CD4-positive, alpha-beta T cell (primary cell): ENCODE measurements at regions of chr9 and their contacts with region 1.

Region 1: GRCh38 chr9:93003552-93004407 is 54.7 kb upstream of the SUSD3 start:
- DNase-seq: peak; percentile 47 to 85 (median 56)
- ATAC-seq: peak; percentile 77
- H3K4me3 ChIP-seq: no peak overlapping the region
- H3K4me3 Mint-ChIP-seq: peak overlapping the region; percentile 71
- H3K27ac ChIP-seq: peak overlapping the region; percentile 7 to 63
- H3K27ac Mint-ChIP-seq: peak overlapping the region; percentile 88
- H3K4me1 ChIP-seq: peaks cover 48% of the 10 kb centered on the region
- H3K4me1 Mint-ChIP-seq: peaks cover 65% of the 10 kb centered on the region
- H3K27me3 ChIP-seq: no peaks in the 10 kb centered on the region
- H3K27me3 Mint-ChIP-seq: no peaks in the 10 kb centered on the region
- CTCF ChIP-seq: peak; percentile 79

Region 2: GRCh38 chr9:92882276-92882675 is 121.5 kb before region 1 on chr9:
- CTCF ChIA-PET with region 1: no interaction called
- POLR2A ChIA-PET with region 1: no interaction called
- intact Hi-C with region 1: no loop called
- DNase-seq: no peak
- ATAC-seq: no peak
- H3K4me3 ChIP-seq: no peak overlapping the region
- H3K4me3 Mint-ChIP-seq: no peak overlapping the region
- H3K27ac ChIP-seq: no peak overlapping the region
- H3K27ac Mint-ChIP-seq: no peak overlapping the region
- H3K4me1 ChIP-seq: peaks cover 21% of the 10 kb centered on the region
- H3K4me1 Mint-ChIP-seq: peaks cover 57% of the 10 kb centered on the region
- H3K27me3 ChIP-seq: no peaks in the 10 kb centered on the region
- H3K27me3 Mint-ChIP-seq: no peaks in the 10 kb centered on the region
- CTCF ChIP-seq: no peak

Region 3: GRCh38 chr9:92986176-92987085 is 17.3 kb before region 1 on chr9:
- CTCF ChIA-PET with region 1: interaction called, 15 read pairs
- POLR2A ChIA-PET with region 1: interaction called, 4 read pairs
- intact Hi-C with region 1: loop called in 1 of 2 experiments (anchors 2 kb)
- DNase-seq: peak in 12 of 14 experiments; percentile 37 to 80 (median 58)
- ATAC-seq: peak; percentile 67
- H3K4me3 ChIP-seq: no peak overlapping the region
- H3K4me3 Mint-ChIP-seq: peak overlapping the region; percentile 59
- H3K27ac ChIP-seq: peak overlapping the region; percentile 33 to 61
- H3K27ac Mint-ChIP-seq: peak overlapping the region; percentile 75
- H3K4me1 ChIP-seq: peaks cover 59% of the 10 kb centered on the region
- H3K4me1 Mint-ChIP-seq: peaks cover 82% of the 10 kb centered on the region
- H3K27me3 ChIP-seq: no peaks in the 10 kb centered on the region
- H3K27me3 Mint-ChIP-seq: no peaks in the 10 kb centered on the region
- CTCF ChIP-seq: peak; percentile 79

Region 4: DNA sequence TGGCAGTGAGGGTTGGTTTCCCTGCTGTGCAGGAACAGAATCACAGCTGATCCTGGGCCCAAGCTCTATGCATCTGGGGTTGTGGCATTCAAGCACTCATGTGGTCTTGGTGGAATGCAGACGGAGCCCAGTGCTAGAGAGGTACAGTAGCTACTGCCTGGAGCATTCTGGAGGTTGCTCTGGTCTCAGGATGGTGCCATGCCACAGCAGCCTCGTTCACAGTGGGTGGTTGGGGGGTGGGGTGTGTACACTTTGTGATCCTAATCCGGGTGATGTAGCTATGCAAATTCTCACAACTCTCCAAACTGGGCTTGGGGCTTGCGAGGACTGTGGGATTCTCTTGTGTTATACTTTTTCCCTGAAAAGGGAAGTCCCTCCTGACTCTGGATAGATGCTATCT is 11.2 kb before region 1 on chr9:
- CTCF ChIA-PET with region 1: interaction called, 15 read pairs
- POLR2A ChIA-PET with region 1: interaction called, 4 read pairs
- intact Hi-C with region 1: loop called in 1 of 2 experiments (anchors 2 kb)
- DNase-seq: peak in 1 of 14 experiments; percentile 23
- ATAC-seq: no peak
- H3K4me3 ChIP-seq: no peak overlapping the region
- H3K4me3 Mint-ChIP-seq: peak overlapping the region; percentile 2
- H3K27ac ChIP-seq: peak overlapping the region in 1 of 2 donors; percentile 22
- H3K27ac Mint-ChIP-seq: peak overlapping the region; percentile 75
- H3K4me1 ChIP-seq: peaks cover 38% of the 10 kb centered on the region
- H3K4me1 Mint-ChIP-seq: peaks cover 99% of the 10 kb centered on the region
- H3K27me3 ChIP-seq: no peaks in the 10 kb centered on the region
- H3K27me3 Mint-ChIP-seq: no peaks in the 10 kb centered on the region
- CTCF ChIP-seq: no peak

Region 5: DNA sequence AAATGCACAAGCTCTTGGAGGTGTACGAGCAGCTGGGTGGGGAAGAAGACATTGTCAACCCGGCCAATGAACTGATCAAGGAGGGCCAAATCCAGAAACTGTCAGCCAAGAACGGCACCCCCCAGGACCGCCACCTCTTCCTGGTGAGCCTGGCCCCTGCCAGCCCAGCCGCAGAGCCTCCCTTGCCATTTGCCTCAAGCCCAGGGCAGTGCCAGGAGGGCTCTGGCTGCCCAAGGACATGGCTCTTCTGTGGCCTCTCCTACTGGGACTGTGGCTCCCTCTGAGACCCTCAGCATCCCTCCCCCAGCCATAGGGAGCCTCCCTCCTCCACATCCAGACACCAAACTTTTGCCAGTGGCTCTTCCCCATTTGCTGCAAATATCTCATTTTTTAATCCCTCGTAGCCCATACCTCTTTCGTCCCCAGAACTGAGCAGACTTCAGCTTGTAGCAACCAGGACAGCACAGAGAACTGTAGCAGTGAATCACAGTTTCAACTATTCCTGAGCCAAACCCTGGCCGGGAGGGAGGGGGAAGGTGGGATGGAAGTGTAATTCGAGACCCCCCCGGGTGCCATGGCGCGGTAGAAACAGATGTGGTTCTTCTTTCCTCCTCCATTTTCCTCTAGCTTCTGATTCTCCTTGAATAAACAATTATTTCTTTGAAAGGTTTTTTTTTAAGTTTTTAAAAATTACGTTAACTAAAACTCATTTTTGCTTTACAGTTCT is 10.2 kb after region 1 on chr9:
- CTCF ChIA-PET with region 1: interaction called, 7 read pairs
- POLR2A ChIA-PET with region 1: interaction called, 7 read pairs
- intact Hi-C with region 1: loop called in 1 of 2 experiments (anchors 1 kb)
- DNase-seq: peak in 1 of 14 experiments; percentile 28
- ATAC-seq: no peak
- H3K4me3 ChIP-seq: no peak overlapping the region
- H3K4me3 Mint-ChIP-seq: no peak overlapping the region
- H3K27ac ChIP-seq: no peak overlapping the region
- H3K27ac Mint-ChIP-seq: peak overlapping the region; percentile 58
- H3K4me1 ChIP-seq: peaks cover 16% of the 10 kb centered on the region
- H3K4me1 Mint-ChIP-seq: peaks cover 14% of the 10 kb centered on the region
- H3K27me3 ChIP-seq: no peaks in the 10 kb centered on the region
- H3K27me3 Mint-ChIP-seq: no peaks in the 10 kb centered on the region
- CTCF ChIP-seq: no peak

Region 6: DNA sequence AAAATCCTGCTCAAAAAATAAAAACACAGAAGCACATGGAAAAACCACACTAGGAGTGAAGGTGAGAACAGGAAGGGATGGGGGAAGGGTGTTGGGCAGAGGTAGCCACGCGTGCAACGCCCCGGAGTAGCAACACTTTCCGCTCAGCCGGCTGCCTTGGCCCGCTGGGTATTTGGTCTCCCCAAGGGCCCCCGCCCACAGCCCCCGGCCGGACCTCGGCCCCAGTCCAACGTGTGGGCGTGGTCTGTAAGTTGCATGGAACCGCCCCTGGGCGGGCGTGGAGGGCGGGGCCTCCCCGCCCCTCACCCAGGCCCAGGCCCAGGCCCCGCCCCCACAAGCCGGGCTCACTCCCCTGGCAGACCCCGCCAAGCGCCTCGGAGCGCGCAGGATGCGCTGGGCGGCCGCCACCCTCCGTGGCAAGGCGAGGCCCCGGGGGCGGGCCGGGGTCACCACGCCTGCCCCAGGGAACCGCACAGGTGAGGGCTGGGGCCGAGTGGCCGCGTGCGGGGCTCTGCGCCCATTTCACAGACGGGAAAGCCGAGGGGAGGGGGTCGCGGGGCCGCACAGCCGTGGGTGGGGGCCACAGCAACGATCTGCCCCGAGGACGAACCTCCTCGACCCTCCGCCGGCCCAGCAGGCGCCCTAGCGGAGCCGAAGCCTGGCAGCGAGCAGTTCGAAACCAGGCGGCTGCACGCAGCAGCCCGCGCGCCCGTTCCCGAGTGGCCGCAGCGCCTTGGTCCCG is 54.7 kb after region 1 on chr9 and contains the start of gene SUSD3:
- CTCF ChIA-PET with region 1: interaction called, 5 read pairs
- POLR2A ChIA-PET with region 1: interaction called, 13 read pairs
- intact Hi-C with region 1: no loop called
- DNase-seq: peak; percentile 46 to 86 (median 69)
- ATAC-seq: peak; percentile 62
- H3K4me3 ChIP-seq: peak within 1 kb of the TSS; percentile 91
- H3K4me3 Mint-ChIP-seq: peak within 1 kb of the TSS; percentile 96
- H3K27ac ChIP-seq: peak within 1 kb of the TSS; percentile 83 to 90
- H3K27ac Mint-ChIP-seq: peak within 1 kb of the TSS; percentile 100
- H3K4me1 ChIP-seq: peaks cover 74% of the 10 kb centered on the region
- H3K4me1 Mint-ChIP-seq: peaks cover 74% of the 10 kb centered on the region
- H3K27me3 ChIP-seq: no peaks in the 10 kb centered on the region
- H3K27me3 Mint-ChIP-seq: no peaks in the 10 kb centered on the region
- CTCF ChIP-seq: no peak
- total RNA-seq, gene SUSD3: 33.9 to 35.6 TPM

Region 7: GRCh38 chr9:93302551-93303257 is 298.9 kb after region 1 on chr9:
- CTCF ChIA-PET with region 1: no interaction called
- POLR2A ChIA-PET with region 1: no interaction called
- intact Hi-C with region 1: loop called (anchors 5 to 10 kb)
- DNase-seq: peak; percentile 36 to 82 (median 58)
- ATAC-seq: peak; percentile 91
- H3K4me3 ChIP-seq: no peak overlapping the region
- H3K4me3 Mint-ChIP-seq: no peak overlapping the region
- H3K27ac ChIP-seq: no peak overlapping the region
- H3K27ac Mint-ChIP-seq: no peak overlapping the region
- H3K4me1 ChIP-seq: peaks cover 8% of the 10 kb centered on the region
- H3K4me1 Mint-ChIP-seq: peaks cover 2% of the 10 kb centered on the region
- H3K27me3 ChIP-seq: no peaks in the 10 kb centered on the region
- H3K27me3 Mint-ChIP-seq: no peaks in the 10 kb centered on the region
- CTCF ChIP-seq: peak; percentile 59